Vagina (tissue), 2 donors: ENCODE measurements at regions of chr6 and their contacts with region 1.

Region 1: GRCh38 chr6:18368277-18369102 is 18.7 kb upstream of the RNF144B start:
- DNase-seq: no peak
- H3K4me3 ChIP-seq: no peak overlapping the region
- H3K27ac ChIP-seq: no peak overlapping the region
- H3K4me1 ChIP-seq: no peaks in the 10 kb centered on the region
- H3K27me3 ChIP-seq: no peaks in the 10 kb centered on the region
- CTCF ChIP-seq: no peak
- POLR2A ChIP-seq: no peak

Region 2: GRCh38 chr6:18386298-18386976 is 17.9 kb after region 1 on chr6:
- intact Hi-C with region 1: no loop called
- DNase-seq: no peak
- H3K4me3 ChIP-seq: peak overlapping the region in 1 of 2 donors; percentile 50
- H3K27ac ChIP-seq: no peak overlapping the region
- H3K4me1 ChIP-seq: peaks cover 8% of the 10 kb centered on the region
- H3K27me3 ChIP-seq: no peaks in the 10 kb centered on the region
- CTCF ChIP-seq: no peak
- POLR2A ChIP-seq: no peak

Region 3: GRCh38 chr6:20028143-20028542 is 1659.7 kb after region 1 on chr6:
- intact Hi-C with region 1: loop called (anchors 2 kb)
- DNase-seq: no peak
- H3K4me3 ChIP-seq: no peak overlapping the region
- H3K27ac ChIP-seq: no peak overlapping the region
- H3K4me1 ChIP-seq: no peaks in the 10 kb centered on the region
- H3K27me3 ChIP-seq: no peaks in the 10 kb centered on the region
- CTCF ChIP-seq: no peak
- POLR2A ChIP-seq: no peak